HAP-1 (cell line): ENCODE measurements at regions of chr4 and their contacts with region 1.

Region 1: GRCh38 chr4:110516106-110516922 is 40.4 kb downstream of the ENPEP start:
- DNase-seq: peak; percentile 83 to 89
- H3K4me3 ChIP-seq: peak overlapping the region; percentile 28
- H3K4me1 ChIP-seq: peaks cover 2% of the 10 kb centered on the region; the same call in 1 of the 2 replicates
- H3K27me3 ChIP-seq: no peaks in the 10 kb centered on the region

Region 2: DNA sequence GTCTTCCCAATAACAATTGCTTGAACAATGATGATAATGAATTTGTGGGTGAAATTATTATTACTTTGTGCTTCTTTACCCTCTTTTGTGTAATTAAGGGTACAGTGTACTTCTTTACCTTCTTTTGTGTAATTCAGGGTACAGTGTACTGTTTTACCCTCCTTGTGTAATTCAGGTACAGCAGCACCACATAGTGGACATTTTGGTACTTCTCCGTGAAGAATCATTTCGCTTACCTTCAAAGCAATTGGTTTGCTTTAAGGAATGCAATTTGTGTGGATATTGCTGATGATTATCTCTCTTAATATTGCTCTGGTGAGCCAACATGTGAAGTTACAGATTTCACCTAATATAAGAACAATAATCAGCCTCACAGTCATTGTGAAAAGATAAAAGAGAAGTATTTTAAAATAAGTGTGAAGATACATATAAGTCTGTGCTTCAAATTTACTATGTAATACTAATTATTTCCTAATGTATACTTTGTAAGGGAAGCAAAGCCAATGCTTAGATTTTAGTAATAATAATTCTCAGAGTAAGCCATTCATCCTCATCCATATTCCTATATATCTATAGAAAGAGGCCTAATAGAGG is 1109.9 kb before region 1 on chr4:
- in situ Hi-C with region 1: loop called (anchors 25 kb)
- DNase-seq: peak; percentile 63 to 66
- H3K4me3 ChIP-seq: no peak overlapping the region
- H3K4me1 ChIP-seq: no peaks in the 10 kb centered on the region
- H3K27me3 ChIP-seq: no peaks in the 10 kb centered on the region

Region 3: DNA sequence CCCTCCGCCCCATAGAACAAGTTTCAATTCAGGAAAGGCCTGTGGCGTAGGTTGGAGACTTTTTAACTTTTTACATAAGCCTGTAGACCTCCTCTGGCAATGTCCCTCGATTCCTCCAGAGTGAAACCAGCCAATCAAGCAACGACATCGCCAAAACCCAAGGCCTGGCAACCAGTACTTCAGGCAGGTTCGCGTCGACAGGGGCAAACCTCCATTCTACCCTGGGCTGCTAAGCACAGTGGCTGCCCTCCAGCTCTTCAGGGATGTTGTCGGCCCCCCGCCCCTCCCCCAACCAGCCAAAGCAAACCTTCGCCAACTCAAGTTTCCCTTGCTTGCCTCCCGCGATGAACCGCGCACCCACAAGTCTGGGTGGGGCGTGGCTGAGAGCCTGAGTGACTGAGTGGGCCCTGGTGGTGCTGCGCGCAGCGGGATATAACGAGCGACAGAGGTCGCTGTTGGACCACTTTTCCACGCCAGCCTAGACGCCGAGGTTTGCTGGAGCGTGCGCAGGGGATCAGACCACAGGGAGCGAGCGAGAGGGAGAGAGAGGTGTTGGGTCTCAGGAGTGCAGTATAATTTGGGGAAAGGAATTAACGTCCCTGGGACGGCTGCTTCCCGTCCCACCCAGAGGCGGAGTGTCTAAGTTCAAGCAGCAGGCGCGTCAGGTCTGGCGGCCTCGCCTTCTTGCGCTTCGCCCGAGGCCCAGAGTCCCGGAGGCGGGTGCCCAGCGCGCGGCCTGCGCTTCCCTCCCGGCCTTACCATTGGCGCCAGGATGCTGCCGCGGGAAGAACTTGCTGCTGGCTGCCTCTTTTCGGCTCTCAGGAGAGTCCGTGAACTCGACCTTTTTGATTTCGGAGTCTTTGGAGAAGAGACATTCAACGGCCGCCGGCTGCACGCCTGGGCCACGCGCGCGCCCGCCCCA is 115.5 kb after region 1 on chr4:
- in situ Hi-C with region 1: no loop called
- DNase-seq: peak; percentile 90 to 91
- H3K4me3 ChIP-seq: peak overlapping the region; percentile 18
- H3K4me1 ChIP-seq: peaks cover 3% of the 10 kb centered on the region; the same call in 1 of the 2 replicates
- H3K27me3 ChIP-seq: no peaks in the 10 kb centered on the region